GM10248 (cell line): ENCODE measurements at regions of chr7 and their contacts with region 1.

Region 1: DNA sequence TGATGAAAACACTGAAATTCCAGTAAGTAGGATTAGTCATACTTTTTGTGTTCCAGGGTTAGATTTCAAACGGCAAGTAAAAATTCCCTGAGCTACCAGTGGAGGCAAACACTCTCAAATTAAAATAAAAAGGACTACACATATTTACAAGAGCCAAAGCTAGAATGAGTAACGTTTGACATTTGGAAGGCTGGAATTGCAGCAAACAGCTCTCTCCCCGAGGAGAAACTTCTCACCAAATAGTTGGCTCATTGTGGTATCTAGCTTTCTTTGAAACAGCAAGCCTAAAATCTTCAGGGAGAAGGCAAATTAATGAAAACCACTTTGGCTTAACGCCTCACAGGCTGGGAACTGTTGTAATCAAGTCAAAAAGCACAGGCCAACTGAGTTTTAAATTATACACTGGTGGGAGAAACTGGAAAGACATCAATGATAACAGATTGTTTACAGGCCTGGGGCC is 288.3 kb downstream of the SNX13 start:
- DNase-seq: no peak
- CTCF ChIP-seq: no peak

Region 2: GRCh38 chr7:17640730-17641377 is 11.1 kb before region 1 on chr7:
- CTCF ChIA-PET with region 1: interaction called, 22 read pairs
- POLR2A ChIA-PET with region 1: no interaction called
- DNase-seq: peak; percentile 29
- CTCF ChIP-seq: peak; percentile 41